Right cardiac atrium (tissue), 5 donors: ENCODE measurements at regions of chrX and their contacts with region 1.

Region 1: DNA sequence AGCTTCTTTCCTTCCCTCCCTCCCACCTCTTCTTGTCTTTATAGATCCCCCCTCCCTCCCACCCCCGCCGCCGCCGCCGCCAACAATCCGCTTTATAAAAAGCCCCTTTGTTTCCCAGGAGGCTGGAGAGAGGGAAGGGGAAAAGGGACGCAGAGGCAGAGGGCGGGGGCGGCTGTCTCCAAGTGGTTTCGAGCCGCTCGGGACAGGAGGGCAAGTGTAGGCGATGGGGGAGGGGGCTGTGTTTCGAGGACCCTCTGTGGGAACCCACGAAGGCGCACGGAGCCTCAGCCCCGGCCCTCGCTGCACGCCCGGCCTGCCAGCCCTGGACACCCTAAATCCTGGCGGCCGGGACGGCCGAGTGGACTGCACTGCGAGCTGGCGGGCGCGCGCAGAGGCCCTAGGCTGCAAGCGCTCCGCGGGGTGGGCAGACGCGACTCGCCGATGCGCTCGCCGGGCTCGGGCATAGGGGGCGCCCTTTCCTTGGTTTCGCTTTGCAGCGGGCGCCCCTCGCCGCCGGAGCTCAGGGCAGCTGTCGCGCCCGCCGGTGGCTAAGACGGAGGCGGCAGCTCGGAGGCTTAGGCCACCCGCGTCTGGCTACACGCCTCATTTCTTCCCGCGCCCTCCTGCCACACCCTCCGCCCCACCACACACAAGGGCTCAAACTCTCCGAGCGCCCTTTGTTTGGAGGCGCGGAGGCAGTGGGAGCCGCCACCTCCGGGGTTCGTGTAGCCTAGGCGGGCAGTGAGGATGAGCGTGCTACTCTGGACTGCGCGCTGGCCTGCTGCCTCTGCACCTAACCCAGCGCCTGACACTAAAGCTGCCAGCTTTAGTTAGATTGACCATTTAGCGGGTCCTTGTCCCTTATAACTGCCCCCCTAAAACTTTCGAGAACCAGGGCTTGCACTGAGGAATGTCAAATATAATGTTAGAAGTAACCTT is 2.2 kb downstream of the MAMLD1 start:
- DNase-seq: peak; percentile 71 to 92 (median 92)
- ATAC-seq: peak; percentile 66 to 75
- H3K4me3 ChIP-seq: peak overlapping the region; percentile 76
- H3K27ac ChIP-seq: peak overlapping the region; percentile 91
- H3K4me1 ChIP-seq: no peaks in the 10 kb centered on the region
- H3K27me3 ChIP-seq: no peaks in the 10 kb centered on the region

Region 2: GRCh38 chrX:149962859-149963757 is 402.2 kb before region 1 on chrX:
- intact Hi-C with region 1: loop called in 1 of 4 experiments (anchors 10 kb)
- DNase-seq: peak; percentile 32 to 73 (median 58)
- ATAC-seq: peak; percentile 86 to 96
- H3K4me3 ChIP-seq: no peak overlapping the region
- H3K27ac ChIP-seq: peak overlapping the region; percentile 27
- H3K4me1 ChIP-seq: peaks cover 2% of the 10 kb centered on the region
- H3K27me3 ChIP-seq: no peaks in the 10 kb centered on the region

Region 3: DNA sequence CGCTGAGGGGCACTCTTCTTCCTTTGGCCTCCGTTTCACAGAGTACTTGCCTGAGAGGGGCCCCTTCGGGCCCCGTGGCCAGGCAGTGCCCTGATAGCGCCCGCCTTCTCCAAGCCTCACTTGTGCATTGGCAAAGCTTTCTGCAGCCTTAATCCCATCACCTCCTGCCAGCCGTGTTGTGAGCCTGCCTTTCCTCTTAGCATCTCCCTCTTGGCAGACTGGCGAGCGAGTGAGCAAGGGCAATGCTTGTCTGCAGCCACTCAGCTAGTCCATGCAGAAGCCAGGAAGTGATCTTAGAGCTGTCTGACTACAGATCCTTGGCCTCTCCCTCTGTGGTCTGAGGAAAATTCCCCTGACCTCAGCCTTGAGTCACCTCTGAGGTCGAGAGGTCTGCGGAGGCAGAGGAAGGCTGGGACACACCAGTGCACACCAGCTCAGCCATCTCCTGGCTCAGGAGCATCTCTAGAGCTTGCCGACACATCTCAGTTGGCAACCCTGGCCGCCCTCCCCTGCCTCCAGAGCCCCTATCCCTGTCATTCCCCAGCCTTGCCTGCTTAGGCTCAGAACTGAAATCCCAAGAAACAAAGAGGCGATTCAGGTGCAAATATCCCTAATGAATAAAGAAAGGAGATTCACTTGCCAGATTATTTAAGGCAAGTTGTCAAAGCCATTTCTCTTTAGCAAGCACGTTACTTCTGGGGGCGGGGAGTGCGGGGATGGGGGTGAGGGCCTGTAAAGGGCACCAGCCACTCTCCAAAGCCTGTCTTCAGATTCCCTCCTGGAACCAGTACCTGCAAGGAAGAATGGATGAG is 145.7 kb before region 1 on chrX:
- intact Hi-C with region 1: loop called in 1 of 4 experiments (anchors 10 kb)
- DNase-seq: no peak
- ATAC-seq: no peak
- H3K4me3 ChIP-seq: no peak overlapping the region
- H3K27ac ChIP-seq: no peak overlapping the region
- H3K4me1 ChIP-seq: no peaks in the 10 kb centered on the region
- H3K27me3 ChIP-seq: no peaks in the 10 kb centered on the region

Region 4: DNA sequence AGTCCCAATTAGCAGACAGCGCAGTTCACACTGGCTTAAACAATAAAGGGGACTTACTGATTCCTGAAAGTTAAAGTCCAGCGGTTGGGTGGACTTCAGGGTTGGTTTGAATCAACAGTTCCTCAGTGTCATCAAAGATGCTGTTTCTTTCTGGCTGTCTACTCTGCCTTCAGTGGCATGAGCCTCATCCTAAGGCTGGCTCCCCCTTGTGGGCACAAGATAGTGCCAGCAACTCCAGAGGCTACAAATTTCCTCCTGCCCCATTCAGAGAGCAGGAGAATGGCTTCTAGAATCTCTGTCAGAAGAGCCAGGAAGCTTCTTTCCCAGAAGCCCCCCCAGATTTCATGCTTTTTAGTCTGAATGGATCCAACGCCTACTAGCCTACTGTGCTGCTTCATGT is 120.7 kb after region 1 on chrX:
- intact Hi-C with region 1: loop called in 2 of 4 experiments (anchors 5 to 10 kb)
- DNase-seq: peak; percentile 54 to 77 (median 71)
- ATAC-seq: peak; percentile 62 to 73
- H3K4me3 ChIP-seq: no peak overlapping the region
- H3K27ac ChIP-seq: no peak overlapping the region
- H3K4me1 ChIP-seq: peaks cover 2% of the 10 kb centered on the region
- H3K27me3 ChIP-seq: no peaks in the 10 kb centered on the region

Region 5: GRCh38 chrX:150587585-150588503 is 222.5 kb after region 1 on chrX:
- intact Hi-C with region 1: loop called in 1 of 4 experiments (anchors 10 kb)
- DNase-seq: no peak
- ATAC-seq: no peak
- H3K4me3 ChIP-seq: no peak overlapping the region
- H3K27ac ChIP-seq: no peak overlapping the region
- H3K4me1 ChIP-seq: no peaks in the 10 kb centered on the region
- H3K27me3 ChIP-seq: no peaks in the 10 kb centered on the region